ENCODE measurements at regions of chr22 and their contacts with region 1.

Region 1: DNA sequence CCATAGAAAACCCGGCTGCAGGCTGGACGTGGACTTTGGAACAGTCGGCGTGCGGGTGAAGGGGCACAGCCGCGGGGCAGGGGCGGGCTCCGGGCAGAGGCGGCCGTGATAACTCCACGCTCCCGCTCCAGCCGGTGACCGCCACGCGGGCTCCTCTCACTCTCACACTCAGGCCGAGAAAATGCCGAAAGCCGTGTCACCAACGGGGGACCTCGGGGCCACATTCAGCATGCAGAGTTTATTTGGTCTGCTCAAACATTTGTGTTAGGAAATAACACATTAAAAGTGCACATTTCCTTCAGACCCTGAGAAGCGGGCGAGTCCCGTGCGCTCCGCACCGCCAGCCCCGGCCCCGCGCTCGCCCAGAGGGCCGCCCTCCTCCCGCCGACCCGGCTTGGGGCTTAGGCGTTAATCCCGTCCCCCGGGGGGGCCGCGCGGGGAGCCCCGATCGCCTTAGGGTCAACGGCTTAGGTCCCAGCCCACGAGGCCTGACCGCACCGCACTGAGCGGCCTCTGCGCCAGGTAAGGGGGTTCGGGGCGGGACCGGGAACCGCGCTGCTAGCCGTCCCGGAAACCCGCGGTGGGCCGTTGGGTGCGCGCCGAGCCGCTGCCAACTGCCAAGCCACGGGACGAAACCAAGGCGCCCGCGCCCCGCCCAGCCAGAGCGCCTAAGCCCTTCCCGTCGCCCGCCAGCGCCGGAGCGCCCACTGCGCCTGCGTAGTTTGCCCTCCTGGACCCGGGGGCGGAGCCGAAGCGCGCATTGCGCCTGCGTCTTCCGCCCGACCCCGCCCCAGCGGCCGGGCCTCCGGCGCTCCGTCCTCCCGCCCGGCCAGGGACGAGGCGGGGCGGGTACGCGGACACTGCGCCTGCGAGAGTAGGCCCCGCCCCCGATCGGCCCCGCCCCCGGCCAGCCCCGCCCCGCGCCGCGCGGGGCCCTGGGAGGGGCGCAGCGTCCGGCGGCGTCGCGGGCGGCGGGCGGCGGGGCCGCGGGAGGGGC is at the start of gene ZBED4:
- DNase-seq: peak; percentile 99
- H3K4me3 ChIP-seq: peak within 1 kb of the TSS; percentile 79
- H3K27ac ChIP-seq: peak within 1 kb of the TSS; percentile 84
- H3K4me1 ChIP-seq: peaks cover 25% of the 10 kb centered on the region
- CTCF ChIP-seq: no peak
- total RNA-seq, gene ZBED4: 27.8 and 30.4 TPM in 2 replicates

Region 2: DNA sequence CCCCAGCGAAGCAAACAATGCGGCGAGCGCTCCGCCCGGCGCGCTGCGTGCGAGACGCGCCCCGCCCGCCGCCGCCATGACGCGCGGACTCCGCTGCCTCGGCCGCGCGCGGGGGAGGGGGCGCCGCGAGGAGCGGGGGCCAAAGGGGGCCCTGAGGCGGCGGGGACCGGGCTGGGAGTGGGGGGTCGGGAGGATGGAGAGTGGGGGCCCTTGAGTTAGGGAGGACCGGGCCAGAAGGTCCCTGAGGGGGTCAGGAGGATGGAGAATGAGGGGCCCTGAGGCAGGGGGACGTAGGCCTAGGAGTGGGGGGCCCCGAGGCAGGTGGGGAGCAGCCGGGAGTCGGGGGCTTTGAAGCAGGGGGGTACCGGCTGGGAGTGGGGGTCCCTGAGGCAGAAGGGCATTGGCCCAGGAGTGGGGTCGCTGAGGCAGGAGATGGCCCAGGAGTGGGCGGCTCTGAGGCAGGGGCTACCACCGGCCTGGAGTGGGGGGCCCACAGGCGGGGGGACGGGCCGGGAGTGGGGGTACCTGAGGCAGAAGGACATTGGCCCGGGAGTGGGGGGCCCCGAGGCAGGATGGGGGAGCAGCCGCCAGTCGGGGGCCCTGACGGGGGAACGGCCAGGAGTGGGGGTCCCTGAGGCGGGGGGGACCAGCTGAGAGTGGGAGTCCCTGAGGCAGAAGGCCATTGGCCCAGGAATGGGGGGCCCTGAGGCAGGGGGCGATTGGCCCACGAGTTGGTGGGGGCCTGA is 25.2 kb before region 1 on chr22 and contains the start of gene BRD1:
- CTCF ChIA-PET with region 1: no interaction called
- POLR2A ChIA-PET with region 1: no interaction called
- intact Hi-C with region 1: loop called (anchors 2 kb)
- DNase-seq: peak; percentile 83
- H3K4me3 ChIP-seq: peak within 1 kb of the TSS; percentile 78
- H3K27ac ChIP-seq: peak within 1 kb of the TSS; percentile 61
- H3K4me1 ChIP-seq: peaks cover 38% of the 10 kb centered on the region
- CTCF ChIP-seq: no peak
- total RNA-seq, gene BRD1: 37.3 and 38.1 TPM in 2 replicates

Region 3: DNA sequence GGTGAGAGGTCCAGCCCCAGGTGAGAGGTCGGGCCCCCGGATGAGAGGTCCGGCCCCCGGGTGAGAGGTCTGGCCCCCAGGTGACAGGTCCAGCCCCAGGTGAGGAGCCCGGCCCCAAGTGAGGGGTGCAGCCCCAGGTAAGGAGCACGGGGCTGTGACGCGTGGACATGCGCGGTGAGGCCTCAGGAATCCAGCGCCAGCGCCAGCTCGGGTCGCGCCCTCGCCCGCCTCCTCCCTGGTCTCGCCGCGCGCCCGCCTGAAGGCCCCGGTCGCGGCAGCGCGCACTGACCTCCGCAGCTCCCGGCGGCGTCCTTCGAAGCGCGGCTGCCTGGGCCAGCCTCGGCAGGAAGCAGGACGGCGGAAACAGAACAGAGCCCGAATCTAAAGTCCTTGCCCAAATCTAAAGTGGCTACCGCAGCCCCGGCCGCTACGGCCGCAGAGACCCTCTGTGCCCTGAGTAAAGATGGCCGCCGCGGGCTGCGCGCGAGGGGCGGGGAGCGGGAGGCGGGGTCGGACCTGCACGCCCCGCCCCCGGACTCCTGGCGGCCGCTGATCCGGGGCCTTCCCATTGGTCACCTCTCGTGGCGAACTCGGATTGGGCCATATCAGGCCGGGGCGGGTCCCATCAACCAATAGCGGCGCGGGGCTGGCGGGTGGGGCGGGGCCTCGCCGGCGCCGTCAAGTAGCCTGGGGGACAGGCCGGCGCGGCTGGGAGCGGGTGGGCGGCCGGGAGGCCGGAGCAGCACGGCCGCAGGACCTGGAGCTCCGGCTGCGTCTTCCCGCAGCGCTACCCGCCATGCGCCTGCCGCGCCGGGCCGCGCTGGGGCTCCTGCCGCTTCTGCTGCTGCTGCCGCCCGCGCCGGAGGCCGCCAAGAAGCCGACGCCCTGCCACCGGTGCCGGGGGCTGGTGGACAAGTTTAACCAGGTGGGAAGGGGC is 65.0 kb after region 1 on chr22 and contains the starts of genes ALG12 and CRELD2:
- CTCF ChIA-PET with region 1: no interaction called
- POLR2A ChIA-PET with region 1: no interaction called
- intact Hi-C with region 1: loop called (anchors 2 kb)
- DNase-seq: peak; percentile 97
- H3K4me3 ChIP-seq: peak within 1 kb of the TSS; percentile 82
- H3K27ac ChIP-seq: peak within 1 kb of the TSS; percentile 30
- H3K4me1 ChIP-seq: peaks cover 18% of the 10 kb centered on the region
- CTCF ChIP-seq: no peak
- total RNA-seq, gene ALG12: 6.4 and 11.7 TPM in 2 replicates
- total RNA-seq, gene CRELD2: 32.5 and 35.3 TPM in 2 replicates

Region 4: DNA sequence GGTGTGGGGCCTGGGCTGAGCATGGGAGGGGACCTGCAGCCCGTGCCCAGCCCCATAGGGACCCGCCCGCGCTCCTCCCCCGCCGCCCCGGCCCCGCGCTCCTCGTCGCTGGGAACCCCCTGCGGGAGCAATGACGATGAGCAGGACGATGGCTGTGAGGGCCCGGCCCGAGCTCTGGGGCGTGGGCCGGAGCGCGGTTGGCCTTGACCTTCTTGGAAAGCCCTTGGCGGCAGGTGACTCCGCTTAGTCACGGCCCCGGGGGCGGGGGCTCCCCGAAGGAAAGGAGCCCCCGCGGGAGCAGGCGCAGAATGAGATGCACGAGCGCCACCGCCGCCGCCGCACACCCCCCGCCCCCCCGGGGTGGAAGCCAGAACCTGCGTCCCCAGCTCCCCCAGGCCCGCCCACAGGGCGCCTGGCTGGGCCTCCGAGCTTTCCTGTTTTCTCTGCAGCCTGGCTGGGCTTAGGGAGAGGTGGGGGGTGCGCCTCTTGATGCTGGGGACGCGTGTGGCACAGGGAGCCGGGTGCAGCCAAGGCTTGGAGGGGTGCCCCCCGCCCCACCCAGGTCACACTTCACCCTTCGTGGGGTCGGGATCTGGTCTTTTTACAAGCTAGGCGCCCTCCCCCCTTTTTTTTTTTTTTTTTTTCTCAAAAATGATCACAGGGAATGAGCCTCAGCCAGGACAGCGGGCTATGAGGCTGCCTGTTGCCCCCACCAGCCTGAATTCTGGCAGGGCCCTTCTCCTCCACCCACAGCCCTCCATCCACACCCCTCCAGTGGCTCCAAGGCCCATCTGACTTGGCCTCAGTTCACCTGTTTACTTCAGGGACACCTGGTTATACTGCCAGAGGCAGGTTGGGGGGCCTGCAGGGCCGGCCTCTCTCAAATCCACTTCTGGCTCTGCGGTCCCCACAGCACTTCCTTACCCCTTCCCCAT is 83.1 kb after region 1 on chr22:
- CTCF ChIA-PET with region 1: no interaction called
- POLR2A ChIA-PET with region 1: no interaction called
- intact Hi-C with region 1: no loop called
- DNase-seq: peak; percentile 83
- H3K4me3 ChIP-seq: peak overlapping the region; percentile 66
- H3K27ac ChIP-seq: peak overlapping the region; percentile 81
- H3K4me1 ChIP-seq: peaks cover 52% of the 10 kb centered on the region
- CTCF ChIP-seq: no peak

Region 5: GRCh38 chr22:49992921-49993648 is 139.9 kb after region 1 on chr22:
- CTCF ChIA-PET with region 1: no interaction called
- POLR2A ChIA-PET with region 1: no interaction called
- intact Hi-C with region 1: no loop called
- DNase-seq: peak; percentile 74
- H3K4me3 ChIP-seq: no peak overlapping the region
- H3K27ac ChIP-seq: no peak overlapping the region
- H3K4me1 ChIP-seq: peaks cover 10% of the 10 kb centered on the region
- CTCF ChIP-seq: peak; percentile 80

Measured in OCI-LY7 (cell line).